ENCODE measurements at regions of chr9 and their contacts with region 1.

Region 1: DNA sequence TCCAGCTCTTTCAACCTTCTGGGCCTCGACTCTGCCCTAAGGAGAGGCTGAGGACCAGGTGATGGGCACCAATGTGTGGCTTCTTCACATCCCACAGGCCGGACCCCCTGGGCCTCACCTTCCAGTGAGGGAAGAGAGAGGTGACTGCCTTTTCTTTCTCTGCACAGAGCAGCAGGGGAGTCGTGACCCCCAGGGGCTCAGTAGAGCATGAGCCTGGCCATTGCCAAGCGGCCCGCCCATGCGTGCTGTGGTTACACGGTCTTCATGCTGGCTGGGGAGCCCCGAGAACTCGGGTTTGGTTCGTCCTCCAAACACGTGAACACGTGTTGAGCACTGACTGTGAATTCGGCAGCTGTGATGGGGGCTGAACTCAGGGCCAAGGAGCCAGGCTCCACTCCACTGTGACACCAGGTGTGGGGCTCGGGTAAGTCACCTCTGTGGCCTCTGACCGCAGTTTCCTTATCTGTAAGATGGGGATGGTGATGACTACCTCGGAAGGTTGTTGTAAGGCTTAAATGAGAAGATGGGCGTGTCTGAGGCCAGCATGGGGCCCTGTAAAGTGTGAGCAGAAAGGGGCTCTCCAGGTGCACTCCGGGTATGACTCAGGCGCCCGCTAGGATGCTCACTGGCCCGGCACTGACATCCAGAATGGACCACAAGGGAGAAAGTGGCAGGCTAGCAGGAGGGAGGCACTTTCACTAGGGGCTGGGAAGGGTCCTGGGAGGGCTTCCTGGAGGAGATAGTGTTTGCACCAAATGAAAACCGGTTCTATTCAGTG is 13.4 kb upstream of the GRHPR start:
- DNase-seq: peak; percentile 100
- ATAC-seq: peak; percentile 76
- H3K4me3 ChIP-seq: peak overlapping the region; percentile 57; the same call in 1 of the 2 replicates
- H3K27ac ChIP-seq: peak overlapping the region; percentile 100
- H3K4me1 ChIP-seq: peaks cover 66% of the 10 kb centered on the region
- H3K27me3 ChIP-seq: no peaks in the 10 kb centered on the region
- CTCF ChIP-seq: peak in 2 of 3 experiments; percentile 11 to 16; a peak in 1 of 6 replicates
- EP300 ChIP-seq: peak; percentile 98 to 99
- POLR2A ChIP-seq: peak; percentile 85
- RAD21 ChIP-seq: no peak

Region 2: GRCh38 chr9:37027582-37028419 is 381.3 kb before region 1 on chr9:
- CTCF ChIA-PET with region 1: interaction called, 3 read pairs
- POLR2A ChIA-PET with region 1: no interaction called
- RAD21 ChIA-PET with region 1: interaction called, 9 read pairs
- SMC1A ChIA-PET with region 1: no interaction called
- in situ Hi-C with region 1: no loop called
- intact Hi-C with region 1: loop called (anchors 2 kb)
- DNase-seq: peak; percentile 85
- ATAC-seq: peak; percentile 78
- H3K4me3 ChIP-seq: peak overlapping the region; percentile 96
- H3K27ac ChIP-seq: peak overlapping the region; percentile 88
- H3K4me1 ChIP-seq: peaks cover 20% of the 10 kb centered on the region
- H3K27me3 ChIP-seq: no peaks in the 10 kb centered on the region
- CTCF ChIP-seq: no peak
- EP300 ChIP-seq: no peak
- POLR2A ChIP-seq: no peak
- RAD21 ChIP-seq: no peak

Region 3: GRCh38 chr9:37283730-37284325 is 125.3 kb before region 1 on chr9:
- CTCF ChIA-PET with region 1: interaction called, 3 read pairs
- POLR2A ChIA-PET with region 1: interaction called, 3 read pairs
- RAD21 ChIA-PET with region 1: interaction called, 6 read pairs
- SMC1A ChIA-PET with region 1: no interaction called
- in situ Hi-C with region 1: no loop called
- intact Hi-C with region 1: loop called (anchors 2 kb)
- DNase-seq: peak; percentile 72
- ATAC-seq: peak; percentile 63
- H3K4me3 ChIP-seq: peak overlapping the region; percentile 57
- H3K27ac ChIP-seq: peak overlapping the region; percentile 84
- H3K4me1 ChIP-seq: peaks cover 13% of the 10 kb centered on the region
- H3K27me3 ChIP-seq: no peaks in the 10 kb centered on the region
- CTCF ChIP-seq: no peak
- EP300 ChIP-seq: 0 out of 4 replicates have a peak, but pooled peaks of 1 of the 2 experiments have one; percentile 37
- POLR2A ChIP-seq: no peak
- RAD21 ChIP-seq: no peak

Region 4: GRCh38 chr9:37371565-37372464 is 37.3 kb before region 1 on chr9:
- CTCF ChIA-PET with region 1: interaction called, 220 read pairs
- POLR2A ChIA-PET with region 1: interaction called, 212 read pairs
- RAD21 ChIA-PET with region 1: interaction called, 126 read pairs
- SMC1A ChIA-PET with region 1: interaction called, 16 read pairs
- in situ Hi-C with region 1: no loop called
- intact Hi-C with region 1: loop called (anchors 1 kb)
- DNase-seq: peak; percentile 63
- ATAC-seq: peak; percentile 44
- H3K4me3 ChIP-seq: no peak overlapping the region
- H3K27ac ChIP-seq: peak overlapping the region; percentile 97
- H3K4me1 ChIP-seq: peaks cover 78% of the 10 kb centered on the region
- H3K27me3 ChIP-seq: no peaks in the 10 kb centered on the region
- CTCF ChIP-seq: no peak
- EP300 ChIP-seq: peak in 1 of 2 experiments; percentile 33; a peak in 2 of 4 replicates
- POLR2A ChIP-seq: peak; percentile 7; the same call in 1 of the 2 replicates
- RAD21 ChIP-seq: no peak

Region 5: DNA sequence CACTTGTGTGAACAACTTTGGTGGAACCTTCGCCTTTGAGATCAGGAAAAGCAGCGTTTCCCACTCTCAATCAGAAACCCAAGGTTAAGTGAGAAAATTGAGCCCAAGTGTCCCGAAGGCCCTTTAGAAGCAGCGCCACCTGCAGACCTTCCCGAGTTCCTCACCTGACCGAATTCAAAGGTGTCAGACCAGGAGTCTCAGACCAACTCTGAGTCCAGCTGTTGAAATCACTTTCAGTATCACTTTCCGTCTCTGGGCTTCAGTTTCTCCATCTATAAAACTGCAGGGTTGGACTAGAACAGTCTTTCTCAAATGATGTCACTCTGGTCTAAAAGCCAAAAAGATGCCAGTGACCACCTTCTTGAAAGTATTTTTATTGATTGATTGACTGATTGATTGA is 18.4 kb before region 1 on chr9:
- CTCF ChIA-PET with region 1: interaction called, 17 read pairs
- POLR2A ChIA-PET with region 1: interaction called, 5 read pairs
- RAD21 ChIA-PET with region 1: interaction called, 17 read pairs
- SMC1A ChIA-PET with region 1: interaction called, 23 read pairs
- in situ Hi-C with region 1: no loop called
- intact Hi-C with region 1: no loop called
- DNase-seq: peak; percentile 89
- ATAC-seq: peak; percentile 95
- H3K4me3 ChIP-seq: no peak overlapping the region
- H3K27ac ChIP-seq: peak overlapping the region; percentile 68
- H3K4me1 ChIP-seq: peaks cover 18% of the 10 kb centered on the region
- H3K27me3 ChIP-seq: no peaks in the 10 kb centered on the region
- CTCF ChIP-seq: peak; percentile 76 to 90 (median 77)
- EP300 ChIP-seq: no peak
- POLR2A ChIP-seq: no peak
- RAD21 ChIP-seq: peak; percentile 83

Region 6: GRCh38 chr9:37565661-37566618 is 156.8 kb after region 1 on chr9:
- CTCF ChIA-PET with region 1: no interaction called
- POLR2A ChIA-PET with region 1: no interaction called
- RAD21 ChIA-PET with region 1: interaction called, 3 read pairs
- SMC1A ChIA-PET with region 1: interaction called, 3 read pairs
- in situ Hi-C with region 1: no loop called
- intact Hi-C with region 1: loop called (anchors 1 kb)
- DNase-seq: peak; percentile 77
- ATAC-seq: peak; percentile 84
- H3K4me3 ChIP-seq: peak overlapping the region; percentile 57
- H3K27ac ChIP-seq: peak overlapping the region; percentile 95
- H3K4me1 ChIP-seq: peaks cover 53% of the 10 kb centered on the region
- H3K27me3 ChIP-seq: no peaks in the 10 kb centered on the region
- CTCF ChIP-seq: no peak
- EP300 ChIP-seq: no peak
- POLR2A ChIP-seq: peak; percentile 54
- RAD21 ChIP-seq: no peak

Region 7: GRCh38 chr9:37820142-37820541 is 411.0 kb after region 1 on chr9:
- CTCF ChIA-PET with region 1: no interaction called
- POLR2A ChIA-PET with region 1: no interaction called
- RAD21 ChIA-PET with region 1: no interaction called
- SMC1A ChIA-PET with region 1: no interaction called
- in situ Hi-C with region 1: no loop called
- intact Hi-C with region 1: no loop called
- DNase-seq: no peak
- ATAC-seq: peak; percentile 59
- H3K4me3 ChIP-seq: no peak overlapping the region
- H3K27ac ChIP-seq: no peak overlapping the region
- H3K4me1 ChIP-seq: peaks cover 2% of the 10 kb centered on the region; the same call in 1 of the 2 replicates
- H3K27me3 ChIP-seq: no peaks in the 10 kb centered on the region
- CTCF ChIP-seq: no peak
- EP300 ChIP-seq: no peak
- POLR2A ChIP-seq: no peak
- RAD21 ChIP-seq: no peak

Region 8: DNA sequence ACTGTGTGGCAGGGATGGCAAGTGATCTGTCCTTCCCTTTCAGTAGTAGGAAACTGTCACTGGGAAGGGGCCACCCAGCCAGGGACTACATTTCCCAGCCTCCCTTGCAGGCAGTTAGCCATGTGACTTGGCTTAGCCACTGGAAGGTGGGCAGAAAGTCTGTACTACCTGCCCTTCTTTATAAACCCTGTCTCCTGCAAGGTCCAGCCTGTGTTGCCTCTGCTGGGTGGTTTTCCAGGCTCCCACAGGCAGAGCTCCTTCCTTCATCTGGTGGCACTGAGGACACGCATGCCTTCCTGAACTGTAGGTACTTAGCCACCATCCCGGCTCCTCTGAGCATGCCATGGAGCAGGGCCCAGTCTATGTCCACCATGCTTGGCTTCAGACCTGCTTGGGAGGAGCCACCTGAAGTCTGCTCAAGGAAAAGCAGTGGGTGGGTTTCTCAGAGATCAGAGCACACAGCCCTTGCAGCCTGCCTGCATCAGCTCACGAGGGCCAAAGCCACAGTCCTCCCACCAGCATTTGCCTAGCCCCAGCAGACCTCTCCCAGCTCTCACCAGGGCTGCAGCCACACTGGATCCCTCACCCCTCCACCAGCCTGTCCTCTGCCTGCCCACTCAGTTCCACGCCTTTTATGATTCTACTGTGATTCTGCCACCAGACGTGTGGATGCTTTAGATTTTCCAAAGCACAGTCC is 511.5 kb after region 1 on chr9:
- CTCF ChIA-PET with region 1: no interaction called
- POLR2A ChIA-PET with region 1: no interaction called
- RAD21 ChIA-PET with region 1: no interaction called
- SMC1A ChIA-PET with region 1: no interaction called
- in situ Hi-C with region 1: no loop called
- intact Hi-C with region 1: no loop called
- DNase-seq: no peak
- ATAC-seq: peak; percentile 89
- H3K4me3 ChIP-seq: no peak overlapping the region
- H3K27ac ChIP-seq: no peak overlapping the region
- H3K4me1 ChIP-seq: no peaks in the 10 kb centered on the region
- H3K27me3 ChIP-seq: no peaks in the 10 kb centered on the region
- CTCF ChIP-seq: no peak
- EP300 ChIP-seq: no peak
- POLR2A ChIP-seq: no peak
- RAD21 ChIP-seq: no peak

Region 9: DNA sequence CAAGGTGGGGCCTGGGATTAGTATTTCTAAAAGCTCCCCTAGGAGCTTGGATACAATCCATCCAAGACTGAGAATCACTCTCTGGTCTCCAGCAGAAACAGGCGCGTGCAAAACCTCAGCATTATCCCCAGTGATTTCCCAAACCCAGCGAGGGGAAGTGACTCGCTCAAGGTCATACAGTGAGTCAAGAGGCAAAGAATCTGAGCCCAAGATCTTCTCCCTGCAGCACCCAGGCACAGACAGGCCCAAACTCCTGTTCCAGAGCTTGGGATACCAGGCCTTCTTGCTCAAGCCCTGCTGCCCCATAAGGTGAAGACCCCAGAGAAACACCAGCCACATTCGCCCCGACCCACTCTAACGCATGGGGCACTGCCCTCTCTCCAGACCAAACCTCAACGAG is 626.8 kb after region 1 on chr9:
- CTCF ChIA-PET with region 1: no interaction called
- POLR2A ChIA-PET with region 1: no interaction called
- RAD21 ChIA-PET with region 1: no interaction called
- SMC1A ChIA-PET with region 1: no interaction called
- in situ Hi-C with region 1: no loop called
- intact Hi-C with region 1: no loop called
- DNase-seq: no peak
- ATAC-seq: no peak
- H3K4me3 ChIP-seq: no peak overlapping the region
- H3K27ac ChIP-seq: no peak overlapping the region
- H3K4me1 ChIP-seq: peaks cover 5% of the 10 kb centered on the region
- H3K27me3 ChIP-seq: no peaks in the 10 kb centered on the region
- CTCF ChIP-seq: no peak
- EP300 ChIP-seq: no peak
- POLR2A ChIP-seq: no peak
- RAD21 ChIP-seq: no peak

Measured in GM12878 (cell line).